WTC11 (cell line): ENCODE measurements at regions of chr17 and their contacts with region 1.

Region 1: DNA sequence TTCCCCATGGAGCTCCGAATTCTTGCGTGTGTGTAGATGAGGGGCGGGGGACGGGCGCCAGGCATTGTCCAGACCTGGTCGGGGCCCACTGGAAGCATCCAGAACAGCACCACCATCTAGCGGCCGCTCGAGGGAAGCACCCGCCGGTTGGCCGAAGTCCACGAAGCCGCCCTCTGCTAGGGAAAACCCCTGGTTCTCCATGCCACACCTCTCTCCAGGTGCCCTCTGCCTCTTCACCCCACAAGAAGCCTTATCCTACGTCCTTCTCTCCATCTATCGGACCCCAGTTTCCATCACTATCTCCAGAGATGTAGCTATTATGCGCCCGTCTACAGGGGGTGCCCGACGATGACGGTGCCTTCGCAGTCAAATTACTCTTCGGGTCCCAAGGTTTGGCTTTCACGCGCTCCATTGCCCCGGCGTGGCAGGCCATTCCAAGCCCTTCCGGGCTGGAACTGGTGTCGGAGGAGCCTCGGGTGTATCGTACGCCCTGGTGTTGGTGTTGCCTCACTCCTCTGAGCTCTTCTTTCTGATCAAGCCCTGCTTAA is 617 bp upstream of the SENP3 start:
- DNase-seq: peak; percentile 93
- ATAC-seq: peak; percentile 65
- H3K4me3 Mint-ChIP-seq: peak overlapping the region; percentile 94
- H3K27ac Mint-ChIP-seq: peak overlapping the region; percentile 97
- H3K4me1 Mint-ChIP-seq: peaks cover 53% of the 10 kb centered on the region
- H3K27me3 Mint-ChIP-seq: no peaks in the 10 kb centered on the region
- CTCF ChIP-seq: peak; percentile 46; the same call in 1 of the 2 replicates

Region 2: DNA sequence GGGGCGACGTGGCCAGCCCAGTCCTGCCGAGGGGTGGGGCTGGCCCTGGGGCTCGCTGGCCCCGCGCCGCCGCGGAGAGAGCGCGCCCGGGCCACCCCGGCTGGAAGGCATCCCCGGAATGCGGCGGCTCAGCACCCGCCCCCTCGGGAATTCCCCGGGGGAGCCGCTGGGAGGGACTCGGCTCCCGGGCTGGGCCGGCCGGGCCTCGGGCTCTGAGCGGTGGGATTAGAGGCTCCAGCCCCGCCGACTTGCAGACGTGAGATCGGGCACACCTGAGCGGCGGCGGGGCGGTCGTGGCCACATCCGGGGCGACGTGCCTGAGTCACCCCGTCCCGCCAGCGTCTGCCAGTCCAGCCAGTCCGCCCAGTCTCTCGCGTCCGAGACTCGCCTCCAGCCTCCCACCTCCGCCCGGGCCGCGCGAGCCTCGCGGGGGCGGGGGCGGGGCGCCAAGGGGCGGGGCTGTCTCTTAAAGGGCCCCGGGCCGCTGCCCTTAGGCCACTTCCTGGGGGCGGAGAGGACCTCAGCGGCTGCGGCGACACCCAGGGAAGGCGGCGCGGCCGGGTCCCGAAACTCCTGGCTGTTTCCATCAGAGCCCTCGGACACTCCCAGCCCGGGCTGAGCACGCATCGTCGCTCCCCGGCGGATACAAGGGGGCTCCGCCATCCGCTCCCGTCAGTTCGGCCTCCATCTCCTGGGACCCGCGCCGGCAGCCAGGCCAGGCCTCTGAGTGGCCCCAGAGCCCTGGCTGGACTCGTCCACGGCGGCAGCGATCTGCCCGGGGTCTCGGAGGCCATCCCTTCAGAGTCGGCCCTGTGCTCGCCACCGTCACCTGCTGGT is 209.2 kb before region 1 on chr17 and contains the start of gene KCTD11:
- CTCF ChIA-PET with region 1: interaction called, 34 read pairs
- POLR2A ChIA-PET with region 1: no interaction called
- DNase-seq: peak; percentile 89
- ATAC-seq: peak; percentile 38
- H3K4me3 Mint-ChIP-seq: peak within 1 kb of the TSS; percentile 81
- H3K27ac Mint-ChIP-seq: peak within 1 kb of the TSS; percentile 60; the same call in 1 of the 2 replicates
- H3K4me1 Mint-ChIP-seq: peaks cover 33% of the 10 kb centered on the region
- H3K27me3 Mint-ChIP-seq: peaks cover 7% of the 10 kb centered on the region
- CTCF ChIP-seq: no peak
- total RNA-seq, gene KCTD11: 8.1 to 9.0 TPM (median 8.2 TPM) in 3 replicates

Region 3: DNA sequence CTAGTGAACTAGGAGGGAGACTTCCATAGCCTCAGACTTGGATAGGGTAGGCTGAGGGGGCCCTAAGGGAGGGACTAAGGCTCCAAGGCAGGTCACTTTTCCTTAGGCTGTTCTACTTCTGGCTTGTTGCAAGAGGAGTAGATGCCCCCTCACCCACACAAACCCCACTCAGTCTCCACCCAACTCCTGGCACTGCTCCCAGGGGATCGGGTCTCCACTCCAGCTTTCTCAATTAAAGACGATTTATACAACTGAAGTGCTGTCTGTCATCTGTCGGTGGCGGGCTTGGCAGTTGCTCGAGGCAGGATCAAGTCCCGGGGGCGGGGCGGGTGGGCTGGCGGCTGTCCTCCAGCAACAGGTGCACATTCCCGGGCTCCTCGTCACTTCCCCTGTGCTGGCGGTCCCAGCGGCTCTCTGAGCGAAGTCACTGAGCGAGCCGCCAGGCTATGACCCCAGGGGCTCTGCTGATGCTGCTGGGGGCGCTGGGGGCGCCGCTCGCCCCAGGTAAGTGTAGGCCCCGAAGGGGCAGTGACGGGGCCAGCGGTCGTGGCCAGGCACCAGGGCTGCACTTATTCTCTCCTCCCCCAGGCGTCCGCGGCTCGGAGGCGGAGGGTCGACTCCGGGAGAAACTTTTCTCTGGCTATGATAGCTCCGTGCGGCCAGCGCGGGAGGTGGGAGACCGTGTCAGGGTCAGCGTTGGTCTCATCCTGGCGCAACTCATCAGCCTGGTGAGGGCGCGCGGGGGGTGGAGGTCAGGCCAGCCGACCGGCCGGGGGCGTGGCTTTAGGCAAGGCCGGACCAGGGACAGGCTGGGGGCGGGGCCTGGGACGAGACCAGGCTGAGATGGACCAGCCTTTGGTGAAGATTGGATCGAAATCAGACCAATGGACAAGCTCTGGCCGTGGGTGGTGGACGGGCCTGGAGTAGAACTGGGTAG is 116.2 kb before region 1 on chr17 and contains the start of gene CHRNB1:
- CTCF ChIA-PET with region 1: interaction called, 16 read pairs
- POLR2A ChIA-PET with region 1: no interaction called
- DNase-seq: peak; percentile 93
- ATAC-seq: peak; percentile 75
- H3K4me3 Mint-ChIP-seq: peak within 1 kb of the TSS; percentile 87
- H3K27ac Mint-ChIP-seq: peak within 1 kb of the TSS; percentile 99
- H3K4me1 Mint-ChIP-seq: peaks cover 33% of the 10 kb centered on the region
- H3K27me3 Mint-ChIP-seq: peaks cover 39% of the 10 kb centered on the region
- CTCF ChIP-seq: no peak
- total RNA-seq, gene CHRNB1: 16.0 to 21.5 TPM (median 20.8 TPM) in 3 replicates

Region 4: GRCh38 chr17:7515911-7516610 is 45.0 kb before region 1 on chr17:
- CTCF ChIA-PET with region 1: interaction called, 81 read pairs
- POLR2A ChIA-PET with region 1: interaction called, 5 read pairs
- DNase-seq: no peak
- ATAC-seq: no peak
- H3K4me3 Mint-ChIP-seq: no peak overlapping the region
- H3K27ac Mint-ChIP-seq: 0 out of 2 replicates have a peak overlapping the region, but pooled peaks have one; percentile 34
- H3K4me1 Mint-ChIP-seq: no peaks in the 10 kb centered on the region
- H3K27me3 Mint-ChIP-seq: no peaks in the 10 kb centered on the region
- CTCF ChIP-seq: no peak

Region 5: DNA sequence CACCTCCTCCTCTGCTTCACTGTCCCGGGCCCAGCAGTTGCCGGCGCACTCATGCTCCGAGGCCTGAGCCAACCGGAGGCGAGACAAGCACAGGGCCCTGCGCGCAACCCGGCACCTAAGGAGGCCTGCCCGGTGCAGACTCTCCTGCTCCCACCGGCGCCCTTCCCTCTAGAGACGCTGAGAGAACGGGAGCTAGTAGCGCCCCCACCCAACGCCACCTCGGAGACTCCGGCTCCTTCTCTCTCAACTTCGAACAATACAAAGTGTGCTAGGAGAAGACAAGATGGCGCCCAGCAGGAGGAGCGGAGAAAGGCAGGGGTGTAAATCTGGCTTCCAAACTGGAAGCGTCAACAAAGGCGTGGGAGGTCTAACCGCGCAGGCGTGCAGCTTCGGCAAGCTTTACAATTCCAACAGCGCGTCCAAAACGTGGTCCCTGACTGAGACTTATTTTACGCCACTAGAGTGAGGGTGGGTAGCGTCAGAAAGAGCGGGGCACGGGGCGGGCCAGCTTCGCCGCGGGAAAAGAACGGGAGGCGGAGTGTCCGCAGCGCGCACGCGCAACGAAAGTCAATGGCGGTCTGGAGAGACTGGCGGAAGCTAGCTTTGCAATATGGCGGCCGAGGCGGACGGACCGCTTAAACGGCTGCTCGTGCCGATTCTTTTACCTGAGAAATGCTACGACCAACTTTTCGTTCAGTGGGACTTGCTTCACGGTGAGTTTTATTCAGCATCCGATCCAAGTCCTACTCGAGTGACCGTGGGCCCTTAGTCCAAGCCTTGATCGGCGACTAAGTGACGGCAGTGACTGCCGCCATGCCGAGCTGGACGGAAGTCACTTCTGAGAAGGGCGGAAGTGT is 22.4 kb after region 1 on chr17 and contains the start of gene MPDU1:
- CTCF ChIA-PET with region 1: interaction called, 61 read pairs
- POLR2A ChIA-PET with region 1: interaction called, 5 read pairs
- DNase-seq: peak; percentile 96
- ATAC-seq: peak; percentile 26
- H3K4me3 Mint-ChIP-seq: peak within 1 kb of the TSS; percentile 97
- H3K27ac Mint-ChIP-seq: peak within 1 kb of the TSS; percentile 100
- H3K4me1 Mint-ChIP-seq: peaks cover 48% of the 10 kb centered on the region
- H3K27me3 Mint-ChIP-seq: no peaks in the 10 kb centered on the region
- CTCF ChIP-seq: no peak
- total RNA-seq, gene MPDU1: 55.3 to 57.7 TPM (median 57.0 TPM) in 3 replicates